Activated T-helper 2 cell treated with anti-CD3 and anti-CD28 coated beads, Interferon-gamma antibody, Interleukin-2, Interleukin-4, amounts not matched to agents 10 μg/mL and 5 μg/mL and 100 μg/mL, durations not matched to agents 14 hours and 24 hours and 36 hours (primary cell): ENCODE measurements at regions of chr17 and their contacts with region 1.

Region 1: GRCh38 chr17:58631523-58632323 is 60.1 kb downstream of the TEX14 start:
- DNase-seq: peak; percentile 95
- H3K4me3 Mint-ChIP-seq: no peak overlapping the region
- H3K27ac Mint-ChIP-seq: no peak overlapping the region
- H3K4me1 Mint-ChIP-seq: peaks cover 5% of the 10 kb centered on the region
- H3K27me3 Mint-ChIP-seq: no peaks in the 10 kb centered on the region

Region 2: DNA sequence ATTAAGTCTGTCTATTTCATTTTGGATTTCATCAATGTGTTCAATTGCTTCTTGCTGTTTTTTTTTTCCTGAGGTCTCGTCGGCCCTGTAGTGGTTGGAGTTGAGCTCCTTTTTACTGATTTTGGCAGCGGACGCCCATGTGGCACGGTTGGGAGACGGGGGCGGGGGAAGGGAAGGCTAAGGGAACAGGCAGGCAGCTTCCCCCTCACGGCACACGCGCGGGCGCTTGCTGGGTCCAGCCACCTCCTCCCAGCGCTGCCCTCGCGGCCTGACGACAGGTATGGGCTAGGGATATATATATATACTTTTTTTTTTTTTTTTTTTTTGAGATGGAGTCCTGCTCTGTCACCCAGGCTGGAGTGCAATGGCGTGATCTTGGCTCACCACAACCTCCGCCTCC is 154.9 kb before region 1 on chr17:
- intact Hi-C with region 1: no loop called
- DNase-seq: no peak
- H3K4me3 Mint-ChIP-seq: no peak overlapping the region
- H3K27ac Mint-ChIP-seq: no peak overlapping the region
- H3K4me1 Mint-ChIP-seq: no peaks in the 10 kb centered on the region
- H3K27me3 Mint-ChIP-seq: no peaks in the 10 kb centered on the region

Region 3: DNA sequence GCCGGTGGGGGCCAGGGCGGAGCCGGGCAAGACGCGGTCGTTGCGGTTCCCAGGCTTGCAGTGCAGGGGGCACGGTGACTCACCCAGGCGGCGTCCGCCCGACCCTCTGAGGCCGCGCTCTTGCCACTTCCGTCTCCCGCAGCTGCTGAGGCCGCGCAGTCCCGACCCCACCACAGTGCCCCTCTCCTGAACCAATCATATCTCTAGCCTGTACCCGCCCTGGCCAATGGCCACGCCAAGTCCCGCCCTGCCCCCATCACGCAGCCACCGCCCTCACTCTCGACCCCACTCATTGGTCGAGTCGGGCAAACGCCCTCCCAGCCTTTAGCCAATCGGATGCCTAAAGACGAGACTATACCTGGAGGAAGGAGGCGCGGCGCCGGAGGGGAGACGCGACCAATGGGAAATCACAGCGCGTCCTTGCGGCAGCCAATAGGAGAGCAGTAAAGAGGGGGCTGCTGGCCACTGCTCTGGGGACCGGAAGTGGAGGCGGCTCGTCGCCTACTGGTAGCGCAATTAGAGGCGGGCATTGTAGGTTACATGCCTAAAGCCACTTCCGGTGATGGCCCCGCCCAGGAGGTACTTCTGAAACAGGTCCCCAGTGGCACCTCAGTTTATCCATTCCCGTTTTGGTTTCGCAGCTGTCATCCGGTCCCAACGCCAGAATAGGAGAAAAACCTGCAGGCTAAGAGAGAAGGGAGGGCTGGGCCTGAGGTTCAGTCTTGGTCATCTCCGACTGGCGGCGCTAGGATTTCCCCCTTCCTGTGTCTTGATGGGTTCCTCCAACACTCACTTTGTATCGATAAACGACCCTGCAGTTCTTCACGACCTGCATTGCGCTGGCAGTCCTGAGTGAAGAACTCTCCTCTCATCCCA is 113.8 kb before region 1 on chr17:
- intact Hi-C with region 1: loop called (anchors 1 kb)
- DNase-seq: peak; percentile 100
- H3K4me3 Mint-ChIP-seq: peak overlapping the region; percentile 89
- H3K27ac Mint-ChIP-seq: peak overlapping the region; percentile 95
- H3K4me1 Mint-ChIP-seq: peaks cover 34% of the 10 kb centered on the region
- H3K27me3 Mint-ChIP-seq: peaks cover 2% of the 10 kb centered on the region

Region 4: GRCh38 chr17:58658804-58659713 is 27.3 kb after region 1 on chr17:
- intact Hi-C with region 1: loop called (anchors 1 kb)
- DNase-seq: peak; percentile 73
- H3K4me3 Mint-ChIP-seq: peak overlapping the region; percentile 74
- H3K27ac Mint-ChIP-seq: peak overlapping the region; percentile 93
- H3K4me1 Mint-ChIP-seq: peaks cover 14% of the 10 kb centered on the region
- H3K27me3 Mint-ChIP-seq: peaks cover 8% of the 10 kb centered on the region

Region 5: DNA sequence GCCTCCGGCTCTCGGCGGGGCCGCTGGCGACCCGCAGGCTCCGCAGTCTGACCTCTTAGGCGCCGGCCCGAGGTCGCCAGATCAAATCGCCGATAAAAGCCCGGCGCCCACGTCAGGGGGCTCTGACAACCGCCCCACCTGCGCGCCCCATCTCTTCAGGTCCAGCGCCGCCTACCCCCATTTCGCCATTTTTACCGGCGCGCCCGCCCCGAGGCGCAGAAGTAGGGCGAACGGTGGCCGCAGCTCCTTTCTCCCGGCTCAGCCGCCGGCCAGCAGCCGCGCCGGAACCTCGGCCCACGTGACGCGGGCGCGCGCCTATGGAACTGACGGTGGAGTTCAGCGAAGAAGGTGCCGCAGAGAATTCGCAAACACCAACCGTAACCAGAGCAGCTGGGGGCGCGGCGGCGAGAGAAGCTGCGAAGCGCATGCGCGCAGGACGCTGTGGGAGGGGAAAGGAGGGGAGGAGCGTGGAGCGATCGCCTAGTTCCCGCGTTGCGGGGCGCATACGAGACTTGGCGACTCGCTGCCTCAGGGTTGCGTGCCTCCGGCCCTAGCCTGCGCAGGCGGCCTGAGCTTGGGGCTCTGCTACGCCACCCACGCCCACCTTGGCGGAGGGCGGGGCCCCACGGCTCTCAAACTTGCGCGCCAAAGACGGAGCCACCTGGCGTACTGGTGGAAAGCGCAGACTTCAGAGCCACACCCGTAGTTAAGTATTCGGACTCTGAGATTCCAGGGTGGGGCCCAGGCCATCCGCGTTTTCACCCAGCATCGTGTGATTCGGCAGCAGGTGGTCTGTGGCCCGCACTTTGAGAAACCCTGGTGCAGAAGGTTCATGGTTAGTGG is 475.0 kb after region 1 on chr17 and contains the start of gene TRIM37:
- intact Hi-C with region 1: loop called (anchors 2 kb)
- DNase-seq: peak; percentile 100
- H3K4me3 Mint-ChIP-seq: peak within 1 kb of the TSS; percentile 94
- H3K27ac Mint-ChIP-seq: peak within 1 kb of the TSS; percentile 93
- H3K4me1 Mint-ChIP-seq: peaks cover 43% of the 10 kb centered on the region
- H3K27me3 Mint-ChIP-seq: no peaks in the 10 kb centered on the region
- total RNA-seq, gene TRIM37: 28.4 and 31.4 TPM in 2 replicates